A549 (cell line): ENCODE measurements at regions of chr11 and their contacts with region 1.

Region 1: GRCh38 chr11:65625628-65626342 is 10.2 kb downstream of the PCNX3 start:
- DNase-seq: peak; percentile 61 to 69
- ATAC-seq: peak; percentile 82 to 92
- H3K4me3 ChIP-seq: no peak overlapping the region
- H3K27ac ChIP-seq: no peak overlapping the region
- H3K4me1 ChIP-seq: no peaks in the 10 kb centered on the region
- CTCF ChIP-seq: peak; percentile 62
- EP300 ChIP-seq: no peak
- POLR2A ChIP-seq: no peak
- RAD21 ChIP-seq: peak; percentile 65 to 68

Region 2: GRCh38 chr11:65615229-65615941 is 10.4 kb before region 1 on chr11 and contains the start of gene PCNX3:
- CTCF ChIA-PET with region 1: interaction called, 17 read pairs
- POLR2A ChIA-PET with region 1: interaction called, 4 read pairs
- DNase-seq: peak; percentile 100
- ATAC-seq: peak; percentile 78 to 86
- H3K4me3 ChIP-seq: peak within 1 kb of the TSS; percentile 92
- H3K27ac ChIP-seq: peak within 1 kb of the TSS; percentile 96 to 98
- H3K4me1 ChIP-seq: peaks cover 39% of the 10 kb centered on the region
- CTCF ChIP-seq: no peak
- EP300 ChIP-seq: no peak
- POLR2A ChIP-seq: peak; percentile 45
- RAD21 ChIP-seq: no peak
- polyA plus RNA-seq, gene PCNX3: 14.2 and 17.2 TPM in 2 replicates

Region 3: GRCh38 chr11:65637794-65638317 is 12.1 kb after region 1 on chr11 and contains the start of gene SIPA1:
- CTCF ChIA-PET with region 1: interaction called, 54 read pairs
- POLR2A ChIA-PET with region 1: interaction called, 3 read pairs
- DNase-seq: peak; percentile 58 to 91
- ATAC-seq: peak; percentile 60 to 86
- H3K4me3 ChIP-seq: peak within 1 kb of the TSS; percentile 72
- H3K27ac ChIP-seq: peak within 1 kb of the TSS; percentile 73 to 89
- H3K4me1 ChIP-seq: peaks cover 19% of the 10 kb centered on the region
- CTCF ChIP-seq: no peak
- EP300 ChIP-seq: no peak
- POLR2A ChIP-seq: peak; percentile 42
- RAD21 ChIP-seq: no peak; a peak in 2 of 5 replicates
- polyA plus RNA-seq, gene SIPA1: 9.9 and 10.4 TPM in 2 replicates

Region 4: DNA sequence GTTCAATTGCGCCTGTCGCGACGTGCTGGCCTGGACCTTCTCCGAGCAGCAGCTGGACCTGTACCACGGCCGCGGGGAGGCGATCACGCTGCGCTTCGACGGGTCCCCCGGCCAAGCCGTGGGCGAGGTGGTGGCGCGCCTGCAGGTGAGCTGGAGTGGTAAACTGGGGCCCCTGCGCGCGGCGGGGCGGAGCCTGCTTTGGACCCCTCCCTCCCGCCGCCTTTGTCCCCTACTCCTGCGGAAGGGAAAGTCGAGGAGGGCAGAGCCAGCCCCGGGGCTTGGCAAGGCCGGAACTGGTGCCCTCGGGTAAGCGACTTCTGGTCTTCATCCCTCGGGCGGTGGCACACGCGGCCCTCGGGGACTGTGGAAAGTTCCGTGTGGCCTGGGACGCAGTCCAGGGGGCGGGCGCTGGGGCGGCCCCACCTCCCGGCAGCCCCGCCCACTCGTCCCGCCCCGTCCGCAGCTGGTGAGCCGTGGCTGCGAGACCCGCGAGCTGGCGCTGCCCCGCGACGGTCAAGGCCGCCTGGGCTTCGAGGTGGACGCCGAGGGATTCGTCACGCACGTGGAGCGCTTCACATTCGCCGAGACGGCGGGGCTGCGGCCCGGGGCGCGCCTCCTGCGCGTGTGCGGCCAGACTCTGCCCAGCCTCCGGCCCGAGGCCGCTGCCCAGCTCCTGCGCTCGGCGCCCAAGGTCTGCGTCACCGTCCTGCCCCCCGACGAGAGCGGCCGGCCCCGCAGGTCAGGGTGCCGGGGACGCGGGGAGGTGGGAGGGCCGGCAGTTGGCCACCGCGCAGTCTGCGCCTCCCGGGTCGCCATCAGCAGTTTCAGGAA is 21.4 kb after region 1 on chr11:
- CTCF ChIA-PET with region 1: interaction called, 18 read pairs
- POLR2A ChIA-PET with region 1: no interaction called
- DNase-seq: peak; percentile 61 to 67
- ATAC-seq: peak; percentile 49 to 72
- H3K4me3 ChIP-seq: peak overlapping the region; percentile 51
- H3K27ac ChIP-seq: peak overlapping the region; percentile 74 to 91
- H3K4me1 ChIP-seq: peaks cover 24% of the 10 kb centered on the region; the same call in 2 of the 3 replicates
- CTCF ChIP-seq: no peak
- EP300 ChIP-seq: no peak
- POLR2A ChIP-seq: peak; percentile 79
- RAD21 ChIP-seq: no peak

Region 5: DNA sequence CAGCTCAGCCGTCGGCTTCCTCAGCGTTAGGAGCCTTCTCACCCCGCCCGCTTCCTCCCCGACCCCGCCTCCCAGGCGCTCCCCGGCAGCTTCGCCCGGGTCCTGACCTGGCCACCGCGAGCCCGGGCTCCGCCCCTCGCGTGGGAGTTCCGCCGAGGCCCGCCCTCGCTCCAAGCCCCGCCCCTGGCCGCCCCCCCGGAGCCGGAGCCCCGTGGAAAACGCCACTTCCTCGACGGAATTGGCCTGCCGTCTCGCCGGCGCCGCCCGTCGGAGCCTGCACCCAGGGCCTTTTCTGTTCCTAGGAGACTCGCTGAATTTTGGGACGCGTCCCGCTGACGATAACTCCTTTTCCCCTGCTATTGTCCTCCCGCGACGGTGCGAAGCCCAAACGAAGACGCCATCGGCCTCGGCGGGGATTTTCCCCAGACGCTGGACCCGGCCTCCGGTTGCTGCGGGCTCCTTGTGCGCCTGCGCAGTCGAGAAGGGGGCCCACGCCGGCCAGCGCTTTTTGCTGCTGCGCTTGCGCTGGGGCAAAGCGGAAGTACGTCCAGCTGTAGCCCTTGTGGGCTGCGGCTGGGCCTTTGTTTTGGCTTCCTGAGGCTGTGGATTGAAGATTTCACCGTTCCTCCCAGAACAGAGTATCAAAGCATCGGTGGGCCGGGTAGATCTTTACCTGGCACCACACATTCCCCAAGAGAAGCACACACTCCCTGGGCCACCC is 26.9 kb after region 1 on chr11:
- CTCF ChIA-PET with region 1: interaction called, 18 read pairs
- POLR2A ChIA-PET with region 1: no interaction called
- DNase-seq: peak; percentile 91 to 97
- ATAC-seq: peak; percentile 65 to 84
- H3K4me3 ChIP-seq: peak overlapping the region; percentile 53
- H3K27ac ChIP-seq: peak overlapping the region; percentile 92
- H3K4me1 ChIP-seq: peaks cover 17% of the 10 kb centered on the region
- CTCF ChIP-seq: no peak
- EP300 ChIP-seq: no peak
- POLR2A ChIP-seq: peak; percentile 64
- RAD21 ChIP-seq: no peak

Region 6: GRCh38 chr11:65662799-65663638 is 37.2 kb after region 1 on chr11 and contains the start of gene RELA:
- CTCF ChIA-PET with region 1: interaction called, 11 read pairs
- POLR2A ChIA-PET with region 1: no interaction called
- DNase-seq: peak; percentile 67 to 91
- ATAC-seq: peak; percentile 89 to 91
- H3K4me3 ChIP-seq: peak within 1 kb of the TSS; percentile 100
- H3K27ac ChIP-seq: peak within 1 kb of the TSS; percentile 96 to 98
- H3K4me1 ChIP-seq: peaks cover 13% of the 10 kb centered on the region
- CTCF ChIP-seq: no peak
- EP300 ChIP-seq: no peak
- POLR2A ChIP-seq: peak; percentile 74
- RAD21 ChIP-seq: no peak
- polyA plus RNA-seq, gene RELA: 28.9 and 31.8 TPM in 2 replicates